ENCODE measurements at regions of chr22 and their contacts with region 1.

Region 1: GRCh38 chr22:33504941-33505625 is 415.2 kb downstream of the LARGE1 start:
- DNase-seq: no peak
- ATAC-seq: no peak
- H3K4me3 ChIP-seq: no peak overlapping the region
- H3K27ac ChIP-seq: no peak overlapping the region
- H3K4me1 ChIP-seq: no peaks in the 10 kb centered on the region
- H3K27me3 ChIP-seq: no peaks in the 10 kb centered on the region
- CTCF ChIP-seq: no peak
- EP300 ChIP-seq: no peak
- POLR2A ChIP-seq: no peak
- RAD21 ChIP-seq: no peak

Region 2: DNA sequence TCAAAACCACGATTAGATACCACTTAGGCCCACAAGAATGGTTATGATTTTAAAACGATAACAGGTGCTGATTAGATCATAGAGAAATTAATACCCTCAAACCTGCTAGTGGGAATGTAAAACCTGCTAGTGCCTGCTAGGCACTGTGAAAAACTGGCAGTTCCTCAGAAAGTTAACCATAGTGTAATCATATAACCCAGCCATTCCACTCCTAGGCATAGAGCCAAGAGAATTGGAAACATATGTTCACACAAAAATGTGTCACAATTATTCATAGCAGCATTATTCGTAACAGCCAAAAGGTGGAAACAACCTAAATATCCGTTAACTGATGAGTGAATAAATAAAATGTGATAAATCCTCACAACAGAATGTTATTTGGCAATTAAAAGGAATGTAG is 324.7 kb before region 1 on chr22:
- CTCF ChIA-PET with region 1: no interaction called
- POLR2A ChIA-PET with region 1: no interaction called
- RAD21 ChIA-PET with region 1: no interaction called
- SMC1A ChIA-PET with region 1: no interaction called
- in situ Hi-C with region 1: no loop called
- intact Hi-C with region 1: no loop called
- DNase-seq: no peak
- ATAC-seq: no peak
- H3K4me3 ChIP-seq: no peak overlapping the region
- H3K27ac ChIP-seq: no peak overlapping the region
- H3K4me1 ChIP-seq: no peaks in the 10 kb centered on the region
- H3K27me3 ChIP-seq: no peaks in the 10 kb centered on the region
- CTCF ChIP-seq: no peak
- EP300 ChIP-seq: no peak
- POLR2A ChIP-seq: no peak
- RAD21 ChIP-seq: no peak

Region 3: DNA sequence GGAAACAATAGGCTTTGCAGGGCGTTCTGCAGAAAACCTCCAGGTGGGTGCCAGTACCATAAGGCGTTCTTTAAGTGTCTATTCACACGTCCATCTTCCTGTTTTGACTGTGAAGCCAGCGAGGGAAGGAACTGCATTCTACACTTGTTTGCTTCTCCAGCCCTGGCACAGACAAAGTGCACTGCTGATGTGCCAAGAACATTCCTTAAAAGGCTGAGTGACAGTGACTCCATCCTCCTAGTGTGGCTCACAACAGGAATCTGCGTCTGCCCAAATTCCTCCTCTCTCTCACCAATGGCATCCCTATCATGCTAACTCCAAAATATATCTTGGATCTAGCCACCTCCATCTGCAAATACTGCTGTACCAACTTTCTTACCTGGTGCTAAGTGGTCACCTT is 39.5 kb before region 1 on chr22:
- CTCF ChIA-PET with region 1: no interaction called
- POLR2A ChIA-PET with region 1: no interaction called
- RAD21 ChIA-PET with region 1: no interaction called
- SMC1A ChIA-PET with region 1: no interaction called
- in situ Hi-C with region 1: no loop called
- intact Hi-C with region 1: no loop called
- DNase-seq: no peak
- ATAC-seq: no peak; the same call in 2 of the 3 replicates
- H3K4me3 ChIP-seq: no peak overlapping the region
- H3K27ac ChIP-seq: no peak overlapping the region
- H3K4me1 ChIP-seq: peaks cover 4% of the 10 kb centered on the region
- H3K27me3 ChIP-seq: no peaks in the 10 kb centered on the region
- CTCF ChIP-seq: no peak
- EP300 ChIP-seq: no peak
- POLR2A ChIP-seq: no peak
- RAD21 ChIP-seq: no peak

Region 4: GRCh38 chr22:34105461-34106062 is 600.5 kb after region 1 on chr22:
- CTCF ChIA-PET with region 1: no interaction called
- POLR2A ChIA-PET with region 1: no interaction called
- RAD21 ChIA-PET with region 1: no interaction called
- SMC1A ChIA-PET with region 1: no interaction called
- in situ Hi-C with region 1: loop called (anchors 5 kb)
- intact Hi-C with region 1: no loop called
- DNase-seq: no peak
- ATAC-seq: no peak
- H3K4me3 ChIP-seq: no peak overlapping the region
- H3K27ac ChIP-seq: no peak overlapping the region
- H3K4me1 ChIP-seq: no peaks in the 10 kb centered on the region
- H3K27me3 ChIP-seq: no peaks in the 10 kb centered on the region
- CTCF ChIP-seq: peak; percentile 38 to 63 (median 52); a peak in 5 of 6 replicates
- EP300 ChIP-seq: no peak
- POLR2A ChIP-seq: no peak
- RAD21 ChIP-seq: peak; percentile 50

Measured in GM12878 (cell line).